K562 (cell line): ENCODE measurements at regions of chr18 and their contacts with region 1.

Region 1: DNA sequence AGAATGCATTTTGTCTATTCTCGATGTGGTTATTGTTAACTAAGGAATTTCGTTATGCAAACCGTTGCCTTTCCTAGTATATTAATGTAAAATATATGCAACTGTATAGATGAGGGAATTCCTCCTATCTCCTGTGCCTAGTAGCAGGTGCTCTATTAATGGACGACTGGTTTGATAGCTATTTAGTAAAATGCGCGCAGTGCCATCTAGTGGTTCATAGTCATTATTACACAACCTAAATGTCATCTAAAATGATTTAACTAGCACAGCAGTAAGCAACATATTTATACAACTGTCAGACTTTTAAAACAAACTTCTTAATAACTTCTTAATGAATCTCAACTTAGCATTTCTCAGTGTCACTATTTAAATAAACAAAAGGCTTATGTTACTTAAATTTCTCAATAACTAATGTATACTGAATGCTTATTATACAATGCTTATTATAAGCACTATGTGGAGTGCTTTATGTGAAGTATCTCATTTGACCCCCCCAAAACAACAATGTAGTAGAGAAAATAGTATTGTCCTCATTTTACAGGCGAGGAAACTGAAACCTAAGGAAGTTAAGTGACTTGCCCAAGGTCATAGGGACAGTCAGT is 77.9 kb downstream of the DTNA start:
- DNase-seq: peak; percentile 52 to 69 (median 58)
- ATAC-seq: peak; percentile 81
- H3K4me3 ChIP-seq: no peak overlapping the region
- H3K27ac ChIP-seq: no peak overlapping the region
- H3K4me1 ChIP-seq: no peaks in the 10 kb centered on the region
- H3K27me3 ChIP-seq: no peaks in the 10 kb centered on the region
- CTCF ChIP-seq: peak; percentile 48 to 84 (median 53); a peak in 4 of 6 replicates
- EP300 ChIP-seq: no peak
- POLR2A ChIP-seq: no peak
- RAD21 ChIP-seq: peak; percentile 74 to 85

Region 2: GRCh38 chr18:33231474-33232317 is 1556.3 kb before region 1 on chr18:
- CTCF ChIA-PET with region 1: no interaction called
- POLR2A ChIA-PET with region 1: no interaction called
- in situ Hi-C with region 1: loop called (anchors 25 kb)
- intact Hi-C with region 1: loop called (anchors 2 kb)
- DNase-seq: peak; percentile 43 to 78 (median 50)
- ATAC-seq: peak; percentile 81
- H3K4me3 ChIP-seq: no peak overlapping the region
- H3K27ac ChIP-seq: no peak overlapping the region
- H3K4me1 ChIP-seq: no peaks in the 10 kb centered on the region
- H3K27me3 ChIP-seq: no peaks in the 10 kb centered on the region
- CTCF ChIP-seq: peak; percentile 62 to 77 (median 72)
- EP300 ChIP-seq: no peak
- POLR2A ChIP-seq: no peak
- RAD21 ChIP-seq: peak; percentile 41 to 78

Region 3: GRCh38 chr18:33839441-33840211 is 948.4 kb before region 1 on chr18:
- CTCF ChIA-PET with region 1: interaction called, 3 read pairs
- POLR2A ChIA-PET with region 1: no interaction called
- in situ Hi-C with region 1: no loop called
- intact Hi-C with region 1: loop called (anchors 5 kb)
- DNase-seq: peak; percentile 31 to 48 (median 37)
- ATAC-seq: peak; percentile 55; the same call in 1 of the 3 replicates
- H3K4me3 ChIP-seq: no peak overlapping the region
- H3K27ac ChIP-seq: no peak overlapping the region
- H3K4me1 ChIP-seq: no peaks in the 10 kb centered on the region
- H3K27me3 ChIP-seq: no peaks in the 10 kb centered on the region
- CTCF ChIP-seq: peak; percentile 4 to 52 (median 41); a peak in 3 of 6 replicates
- EP300 ChIP-seq: no peak
- POLR2A ChIP-seq: no peak
- RAD21 ChIP-seq: peak in 1 of 2 experiments; percentile 29; a peak in 1 of 4 replicates

Region 4: GRCh38 chr18:34122724-34123334 is 665.2 kb before region 1 on chr18:
- CTCF ChIA-PET with region 1: no interaction called
- POLR2A ChIA-PET with region 1: no interaction called
- in situ Hi-C with region 1: loop called (anchors 25 kb)
- intact Hi-C with region 1: loop called (anchors 2 kb)
- DNase-seq: peak; percentile 22 to 43 (median 40)
- ATAC-seq: peak; percentile 75
- H3K4me3 ChIP-seq: no peak overlapping the region
- H3K27ac ChIP-seq: no peak overlapping the region
- H3K4me1 ChIP-seq: no peaks in the 10 kb centered on the region
- H3K27me3 ChIP-seq: no peaks in the 10 kb centered on the region
- CTCF ChIP-seq: peak; percentile 65 to 97 (median 96)
- EP300 ChIP-seq: no peak
- POLR2A ChIP-seq: no peak
- RAD21 ChIP-seq: peak; percentile 53 to 68

Region 5: GRCh38 chr18:34661464-34662111 is 126.4 kb before region 1 on chr18:
- CTCF ChIA-PET with region 1: no interaction called
- POLR2A ChIA-PET with region 1: no interaction called
- in situ Hi-C with region 1: no loop called
- intact Hi-C with region 1: loop called (anchors 5 kb)
- DNase-seq: peak; percentile 47 to 63 (median 57)
- ATAC-seq: peak; percentile 82
- H3K4me3 ChIP-seq: no peak overlapping the region
- H3K27ac ChIP-seq: no peak overlapping the region
- H3K4me1 ChIP-seq: no peaks in the 10 kb centered on the region
- H3K27me3 ChIP-seq: no peaks in the 10 kb centered on the region
- CTCF ChIP-seq: peak; percentile 32 to 67 (median 61); a peak in 5 of 6 replicates
- EP300 ChIP-seq: no peak
- POLR2A ChIP-seq: no peak
- RAD21 ChIP-seq: peak; percentile 20 to 53; a peak in 2 of 4 replicates

Region 6: GRCh38 chr18:34729264-34729663 is 58.8 kb before region 1 on chr18:
- CTCF ChIA-PET with region 1: no interaction called
- POLR2A ChIA-PET with region 1: no interaction called
- in situ Hi-C with region 1: no loop called
- intact Hi-C with region 1: loop called (anchors 10 kb)
- DNase-seq: peak in 1 of 4 experiments; percentile 3
- ATAC-seq: 0 out of 3 replicates have a peak, but pooled peaks have one; percentile 56
- H3K4me3 ChIP-seq: no peak overlapping the region
- H3K27ac ChIP-seq: no peak overlapping the region
- H3K4me1 ChIP-seq: no peaks in the 10 kb centered on the region
- H3K27me3 ChIP-seq: no peaks in the 10 kb centered on the region
- CTCF ChIP-seq: peak in 2 of 3 experiments; percentile 23 to 24; a peak in 1 of 6 replicates
- EP300 ChIP-seq: no peak
- POLR2A ChIP-seq: no peak
- RAD21 ChIP-seq: peak in 1 of 2 experiments; percentile 23; a peak in 1 of 4 replicates

Region 7: GRCh38 chr18:35267161-35267651 is 479.2 kb after region 1 on chr18:
- CTCF ChIA-PET with region 1: no interaction called
- POLR2A ChIA-PET with region 1: no interaction called
- in situ Hi-C with region 1: no loop called
- intact Hi-C with region 1: no loop called
- DNase-seq: no peak
- ATAC-seq: no peak
- H3K4me3 ChIP-seq: no peak overlapping the region
- H3K27ac ChIP-seq: no peak overlapping the region
- H3K4me1 ChIP-seq: no peaks in the 10 kb centered on the region
- H3K27me3 ChIP-seq: no peaks in the 10 kb centered on the region
- CTCF ChIP-seq: no peak
- EP300 ChIP-seq: no peak
- POLR2A ChIP-seq: no peak
- RAD21 ChIP-seq: no peak